PC-3 (cell line): ENCODE measurements at regions of chr6 and their contacts with region 1.

Region 1: GRCh38 chr6:74409447-74409846 is 713.4 kb downstream of the CD109 start:
- DNase-seq: peak; percentile 64
- ATAC-seq: peak; percentile 70
- H3K4me3 ChIP-seq: no peak overlapping the region
- H3K27ac ChIP-seq: no peak overlapping the region
- H3K4me1 ChIP-seq: no peaks in the 10 kb centered on the region
- H3K27me3 ChIP-seq: no peaks in the 10 kb centered on the region
- CTCF ChIP-seq: peak; percentile 65

Region 2: GRCh38 chr6:73739096-73739495 is 670.4 kb before region 1 on chr6:
- CTCF ChIA-PET with region 1: no interaction called
- POLR2A ChIA-PET with region 1: no interaction called
- intact Hi-C with region 1: loop called (anchors 5 kb)
- DNase-seq: peak; percentile 69
- ATAC-seq: peak; percentile 60
- H3K4me3 ChIP-seq: no peak overlapping the region
- H3K27ac ChIP-seq: no peak overlapping the region
- H3K4me1 ChIP-seq: 0 out of 2 replicates have a peak, but pooled peaks cover 6% of the 10 kb centered on the region
- H3K27me3 ChIP-seq: no peaks in the 10 kb centered on the region
- CTCF ChIP-seq: peak; percentile 74

Region 3: GRCh38 chr6:73969971-73970970 is 439.2 kb before region 1 on chr6:
- CTCF ChIA-PET with region 1: no interaction called
- POLR2A ChIA-PET with region 1: no interaction called
- intact Hi-C with region 1: loop called (anchors 5 kb)
- DNase-seq: peak; percentile 68
- ATAC-seq: peak; percentile 45
- H3K4me3 ChIP-seq: no peak overlapping the region
- H3K27ac ChIP-seq: no peak overlapping the region
- H3K4me1 ChIP-seq: peaks cover 18% of the 10 kb centered on the region
- H3K27me3 ChIP-seq: no peaks in the 10 kb centered on the region
- CTCF ChIP-seq: peak; percentile 82

Region 4: GRCh38 chr6:74091136-74091793 is 318.2 kb before region 1 on chr6:
- CTCF ChIA-PET with region 1: no interaction called
- POLR2A ChIA-PET with region 1: no interaction called
- intact Hi-C with region 1: loop called (anchors 5 kb)
- DNase-seq: peak; percentile 58
- ATAC-seq: peak; percentile 43; the same call in 1 of the 2 replicates
- H3K4me3 ChIP-seq: no peak overlapping the region
- H3K27ac ChIP-seq: no peak overlapping the region
- H3K4me1 ChIP-seq: no peaks in the 10 kb centered on the region
- H3K27me3 ChIP-seq: no peaks in the 10 kb centered on the region
- CTCF ChIP-seq: peak; percentile 75

Region 5: DNA sequence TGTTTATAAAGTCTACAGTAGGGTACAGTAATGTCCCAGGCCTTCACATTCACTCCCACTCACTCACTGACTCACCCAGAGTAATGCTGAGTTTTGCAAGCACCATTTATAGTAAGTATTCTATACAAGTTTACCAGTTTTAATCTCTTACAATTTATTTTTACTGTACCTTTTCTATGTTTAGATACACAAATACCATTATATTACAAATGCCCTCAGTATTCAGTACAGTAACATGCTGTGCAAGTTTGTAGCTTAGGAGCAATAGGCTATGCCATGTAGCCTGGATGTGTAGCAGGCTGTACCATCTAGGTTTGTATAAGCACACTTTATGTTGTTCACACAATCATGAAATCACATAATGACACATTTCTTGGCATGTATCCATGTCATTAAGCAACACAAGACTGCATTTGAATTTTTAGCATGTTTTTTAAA is 39.9 kb before region 1 on chr6:
- CTCF ChIA-PET with region 1: no interaction called
- POLR2A ChIA-PET with region 1: no interaction called
- intact Hi-C with region 1: no loop called
- DNase-seq: peak; percentile 65
- ATAC-seq: peak; percentile 66
- H3K4me3 ChIP-seq: no peak overlapping the region
- H3K27ac ChIP-seq: no peak overlapping the region; the same call in 1 of the 2 replicates
- H3K4me1 ChIP-seq: peaks cover 20% of the 10 kb centered on the region
- H3K27me3 ChIP-seq: no peaks in the 10 kb centered on the region
- CTCF ChIP-seq: no peak

Region 6: DNA sequence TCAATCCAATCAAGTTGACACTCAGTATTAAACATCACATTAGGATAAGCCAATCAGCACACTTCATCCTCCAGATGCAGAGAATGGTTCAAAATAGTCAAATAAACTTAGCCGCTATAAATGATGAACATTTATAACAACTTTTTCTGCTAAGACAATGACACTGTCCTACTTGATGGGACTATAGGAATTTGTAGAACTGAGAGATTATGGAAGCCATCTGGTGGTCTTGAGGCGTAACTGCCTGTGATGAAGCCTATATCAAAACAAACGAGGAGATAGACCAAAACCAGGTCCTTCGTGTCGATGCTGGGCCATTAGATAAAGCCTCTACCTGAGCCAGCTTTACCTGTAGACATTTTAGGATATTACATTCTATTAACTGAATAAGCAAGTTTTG is 165.3 kb after region 1 on chr6:
- CTCF ChIA-PET with region 1: no interaction called
- POLR2A ChIA-PET with region 1: no interaction called
- intact Hi-C with region 1: loop called (anchors 2 kb)
- DNase-seq: peak; percentile 39
- ATAC-seq: peak; percentile 59
- H3K4me3 ChIP-seq: no peak overlapping the region
- H3K27ac ChIP-seq: no peak overlapping the region
- H3K4me1 ChIP-seq: no peaks in the 10 kb centered on the region
- H3K27me3 ChIP-seq: no peaks in the 10 kb centered on the region
- CTCF ChIP-seq: peak; percentile 60

Region 7: DNA sequence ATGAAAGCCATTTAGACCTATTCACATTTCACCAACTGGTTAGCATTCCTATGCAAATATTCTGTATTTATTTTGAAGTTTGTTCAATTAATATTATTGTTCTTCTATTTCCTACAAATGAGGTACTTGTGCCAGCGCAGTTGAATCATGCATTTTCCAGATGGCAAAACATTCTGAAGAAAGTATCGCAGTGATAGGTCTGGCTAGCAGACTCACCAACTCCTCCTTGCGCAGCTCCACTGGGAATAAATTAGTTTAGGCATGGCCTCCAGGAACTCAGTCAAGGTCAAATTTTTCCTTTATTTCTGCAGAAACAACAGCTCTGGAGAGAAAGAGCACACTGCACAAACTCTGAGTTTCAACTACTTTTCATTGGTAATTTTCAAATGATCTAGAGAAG is 358.7 kb after region 1 on chr6:
- CTCF ChIA-PET with region 1: no interaction called
- POLR2A ChIA-PET with region 1: no interaction called
- intact Hi-C with region 1: loop called (anchors 1 kb)
- DNase-seq: no peak
- ATAC-seq: no peak
- H3K4me3 ChIP-seq: no peak overlapping the region
- H3K27ac ChIP-seq: no peak overlapping the region
- H3K4me1 ChIP-seq: no peaks in the 10 kb centered on the region
- H3K27me3 ChIP-seq: no peaks in the 10 kb centered on the region
- CTCF ChIP-seq: no peak

Region 8: GRCh38 chr6:74798302-74798701 is 388.9 kb after region 1 on chr6:
- CTCF ChIA-PET with region 1: no interaction called
- POLR2A ChIA-PET with region 1: no interaction called
- intact Hi-C with region 1: no loop called
- DNase-seq: peak; percentile 5
- ATAC-seq: no peak
- H3K4me3 ChIP-seq: no peak overlapping the region
- H3K27ac ChIP-seq: no peak overlapping the region
- H3K4me1 ChIP-seq: no peaks in the 10 kb centered on the region
- H3K27me3 ChIP-seq: no peaks in the 10 kb centered on the region
- CTCF ChIP-seq: no peak

Region 9: GRCh38 chr6:74899416-74899815 is 490.0 kb after region 1 on chr6:
- CTCF ChIA-PET with region 1: no interaction called
- POLR2A ChIA-PET with region 1: no interaction called
- intact Hi-C with region 1: loop called (anchors 10 kb)
- DNase-seq: peak; percentile 68
- ATAC-seq: peak; percentile 58
- H3K4me3 ChIP-seq: no peak overlapping the region
- H3K27ac ChIP-seq: no peak overlapping the region
- H3K4me1 ChIP-seq: 0 out of 2 replicates have a peak, but pooled peaks cover 3% of the 10 kb centered on the region
- H3K27me3 ChIP-seq: no peaks in the 10 kb centered on the region
- CTCF ChIP-seq: peak; percentile 73